ENCODE measurements at regions of chr20 and their contacts with region 1.

Region 1: GRCh38 chr20:44683263-44684046 is 31.7 kb upstream of the CCN5 start:
- DNase-seq: no peak
- H3K4me3 ChIP-seq: no peak overlapping the region
- H3K27ac ChIP-seq: no peak overlapping the region
- H3K27me3 ChIP-seq: peaks cover 8% of the 10 kb centered on the region
- CTCF ChIP-seq: peak; percentile 74

Region 2: GRCh38 chr20:44388466-44389023 is 294.9 kb before region 1 on chr20:
- CTCF ChIA-PET with region 1: interaction called, 21 read pairs
- POLR2A ChIA-PET with region 1: no interaction called
- DNase-seq: peak; percentile 21
- H3K4me3 ChIP-seq: no peak overlapping the region
- H3K27ac ChIP-seq: no peak overlapping the region
- H3K27me3 ChIP-seq: peaks cover 19% of the 10 kb centered on the region
- CTCF ChIP-seq: peak; percentile 81

Region 3: DNA sequence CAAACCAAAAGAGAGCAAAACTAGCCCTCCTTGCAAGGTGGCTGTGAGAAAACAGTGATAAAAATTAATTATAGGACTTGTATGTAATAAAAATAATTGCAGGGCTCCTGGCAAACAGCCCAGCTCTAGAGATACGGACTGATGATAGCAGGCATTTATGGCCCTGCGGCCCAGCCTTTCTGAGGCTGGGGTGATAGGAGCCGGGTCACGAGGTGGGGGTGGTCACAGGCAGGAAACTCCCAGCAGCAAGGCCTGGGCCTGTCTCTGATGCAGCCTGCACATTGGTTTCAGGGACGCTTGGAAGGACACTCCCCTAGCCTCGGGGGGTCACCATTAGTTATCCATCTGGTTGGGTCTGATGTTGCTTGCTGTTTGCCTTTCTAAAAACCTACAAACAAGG is 226.4 kb before region 1 on chr20:
- CTCF ChIA-PET with region 1: no interaction called
- POLR2A ChIA-PET with region 1: no interaction called
- DNase-seq: no peak
- H3K4me3 ChIP-seq: no peak overlapping the region
- H3K27ac ChIP-seq: no peak overlapping the region
- H3K27me3 ChIP-seq: peaks cover 14% of the 10 kb centered on the region
- CTCF ChIP-seq: no peak

Region 4: GRCh38 chr20:44709380-44709779 is 25.9 kb after region 1 on chr20:
- CTCF ChIA-PET with region 1: interaction called, 11 read pairs
- POLR2A ChIA-PET with region 1: interaction called, 4 read pairs
- DNase-seq: no peak
- H3K4me3 ChIP-seq: no peak overlapping the region
- H3K27ac ChIP-seq: no peak overlapping the region
- H3K27me3 ChIP-seq: peaks cover 9% of the 10 kb centered on the region
- CTCF ChIP-seq: no peak

Region 5: DNA sequence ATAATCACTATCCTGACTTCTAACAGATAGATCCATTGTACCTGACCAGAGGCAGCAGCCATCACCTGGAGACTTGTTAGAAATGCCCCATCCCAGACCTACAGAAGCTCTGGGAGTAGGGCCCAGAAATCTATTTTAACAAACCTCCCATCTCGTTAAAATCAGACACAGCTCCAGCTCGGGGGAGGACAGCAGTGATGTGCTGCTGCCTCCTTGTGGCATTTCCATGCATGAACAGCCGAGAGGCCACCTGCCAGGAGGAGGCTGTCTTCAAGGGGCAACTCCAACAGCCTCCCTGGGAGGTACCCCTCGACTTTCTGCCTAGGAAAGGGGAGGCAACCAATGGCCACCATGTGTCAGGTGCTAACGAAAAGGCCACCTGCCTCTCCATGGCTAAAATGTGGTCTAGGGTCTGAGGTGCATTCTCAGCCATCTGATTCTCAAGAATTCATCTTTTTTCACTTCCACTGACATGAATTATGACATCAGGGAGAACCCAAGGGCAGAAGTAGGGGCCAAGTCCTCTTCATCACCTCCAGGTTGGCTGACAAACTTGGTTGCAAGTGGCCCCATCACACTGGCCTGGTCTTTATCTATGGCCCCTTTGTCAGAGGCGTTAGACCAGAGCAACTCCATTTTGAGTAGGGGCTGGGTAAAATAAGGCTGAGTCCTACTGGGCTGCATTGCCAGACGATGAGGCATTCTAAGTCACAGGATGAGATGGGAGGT is 50.0 kb after region 1 on chr20:
- CTCF ChIA-PET with region 1: interaction called, 190 read pairs
- POLR2A ChIA-PET with region 1: interaction called, 5 read pairs
- DNase-seq: no peak
- H3K4me3 ChIP-seq: no peak overlapping the region
- H3K27ac ChIP-seq: no peak overlapping the region
- H3K27me3 ChIP-seq: no peaks in the 10 kb centered on the region
- CTCF ChIP-seq: peak; percentile 97

Measured in AG04450 (cell line).